ENCODE measurements at regions of chr3 and their contacts with region 1.

Region 1: DNA sequence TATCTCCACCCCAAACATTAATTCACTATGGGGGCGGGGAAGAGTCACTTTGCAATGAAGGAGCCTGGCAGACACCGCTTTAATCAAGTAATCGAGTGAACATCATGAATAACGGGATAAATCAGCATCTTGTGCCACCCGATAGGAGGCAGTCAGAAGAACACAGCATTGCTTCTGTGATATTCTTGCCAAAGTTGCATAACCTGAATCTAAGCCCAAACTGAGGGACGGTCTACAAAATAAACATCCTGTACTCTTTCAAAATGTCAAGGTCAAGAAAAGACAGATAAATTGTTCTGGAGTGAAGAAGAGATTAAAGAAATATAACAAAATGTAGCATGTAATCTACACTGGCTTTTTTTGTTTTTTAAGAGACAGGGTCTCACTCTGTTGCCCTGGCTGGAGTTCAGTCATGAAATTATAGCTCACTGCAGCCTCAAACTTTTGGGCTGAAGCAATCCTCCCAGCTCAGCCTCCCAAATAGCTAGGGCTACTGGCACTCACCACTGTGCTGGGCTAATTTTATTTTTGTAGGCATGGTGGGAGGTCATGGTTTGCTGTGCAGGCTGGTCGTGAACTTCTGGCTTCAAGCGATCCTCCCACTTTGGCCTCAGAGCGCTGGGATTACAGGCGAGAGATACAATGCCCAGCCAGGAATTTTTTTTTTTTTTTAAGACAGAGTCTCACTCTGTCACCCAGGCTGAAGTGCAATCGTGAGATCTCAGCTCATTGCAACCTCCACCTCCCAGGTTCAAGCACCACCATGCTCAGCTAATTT is 20.1 kb upstream of the VWA5B2 start:
- DNase-seq: no peak
- ATAC-seq: no peak
- H3K4me3 ChIP-seq: no peak overlapping the region
- H3K27ac ChIP-seq: no peak overlapping the region
- H3K4me1 ChIP-seq: no peaks in the 10 kb centered on the region
- H3K27me3 ChIP-seq: peaks cover 22% of the 10 kb centered on the region
- CTCF ChIP-seq: no peak

Region 2: DNA sequence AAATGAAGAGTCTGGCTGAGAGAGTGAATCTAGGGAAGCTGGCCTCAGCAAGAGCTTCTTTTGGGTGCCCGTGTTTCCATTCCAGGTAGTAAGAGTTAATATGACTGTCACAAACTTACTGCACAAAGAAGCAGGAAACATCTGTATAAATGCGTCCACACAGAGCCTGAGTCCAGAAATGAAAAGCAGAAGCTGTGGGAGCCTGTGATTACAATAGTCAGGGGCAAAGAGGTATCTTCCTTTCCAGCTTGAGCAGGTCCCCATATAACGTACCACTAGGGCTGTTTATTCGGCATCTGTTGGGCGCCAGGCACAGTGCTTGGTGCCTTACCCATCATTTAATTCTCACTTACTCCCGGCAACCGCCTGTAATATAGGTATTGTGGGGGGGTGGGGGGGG is 996.8 kb before region 1 on chr3:
- CTCF ChIA-PET with region 1: no interaction called
- POLR2A ChIA-PET with region 1: interaction called, 12 read pairs
- intact Hi-C with region 1: no loop called
- DNase-seq: no peak
- ATAC-seq: no peak
- H3K4me3 ChIP-seq: no peak overlapping the region
- H3K27ac ChIP-seq: no peak overlapping the region
- H3K4me1 ChIP-seq: peaks cover 15% of the 10 kb centered on the region
- H3K27me3 ChIP-seq: no peaks in the 10 kb centered on the region
- CTCF ChIP-seq: no peak

Region 3: DNA sequence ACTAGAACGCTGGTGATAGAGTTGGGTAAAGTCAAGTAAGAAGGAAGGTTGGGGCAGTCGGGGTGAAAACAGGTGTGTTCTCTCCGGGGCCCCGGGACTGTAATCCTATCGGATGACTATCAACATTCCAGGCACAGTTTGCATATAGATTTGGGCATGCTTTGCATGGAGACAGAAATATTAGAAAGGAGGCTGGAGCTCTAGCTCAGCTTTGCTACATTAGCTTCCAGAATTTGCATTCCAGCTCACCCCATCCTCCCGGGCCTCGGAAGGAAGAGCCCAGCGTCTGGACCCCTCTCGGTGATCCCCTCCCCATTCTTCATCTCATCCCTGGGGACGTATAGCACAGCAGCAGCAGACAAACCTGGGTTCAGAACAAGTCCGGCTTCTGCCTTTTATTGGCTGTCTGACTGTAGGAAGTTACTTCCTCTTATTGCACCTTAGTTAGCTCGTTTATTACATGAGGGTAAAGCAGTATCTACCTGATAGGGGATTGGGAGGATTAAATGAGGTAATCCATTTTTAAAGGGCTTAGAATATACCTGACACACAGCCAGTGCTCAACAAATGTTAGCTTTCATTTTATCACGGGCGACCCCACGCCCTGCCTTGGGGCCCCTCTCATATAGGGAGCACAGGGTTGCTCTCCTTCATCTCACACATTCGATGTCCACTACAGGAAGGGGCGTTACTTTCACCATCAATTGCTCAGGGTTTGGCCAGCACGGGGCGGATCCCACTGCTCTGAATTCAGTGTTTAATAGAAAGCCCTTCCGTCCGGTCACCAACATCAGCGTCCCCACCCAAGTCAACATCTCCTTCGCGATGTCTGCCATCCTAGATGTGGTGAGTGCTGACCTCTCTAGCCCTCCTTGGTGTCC is 109.3 kb before region 1 on chr3:
- CTCF ChIA-PET with region 1: no interaction called
- POLR2A ChIA-PET with region 1: no interaction called
- intact Hi-C with region 1: no loop called
- DNase-seq: no peak
- ATAC-seq: no peak
- H3K4me3 ChIP-seq: no peak overlapping the region
- H3K27ac ChIP-seq: no peak overlapping the region
- H3K4me1 ChIP-seq: no peaks in the 10 kb centered on the region
- H3K27me3 ChIP-seq: no peaks in the 10 kb centered on the region
- CTCF ChIP-seq: no peak

Region 4: DNA sequence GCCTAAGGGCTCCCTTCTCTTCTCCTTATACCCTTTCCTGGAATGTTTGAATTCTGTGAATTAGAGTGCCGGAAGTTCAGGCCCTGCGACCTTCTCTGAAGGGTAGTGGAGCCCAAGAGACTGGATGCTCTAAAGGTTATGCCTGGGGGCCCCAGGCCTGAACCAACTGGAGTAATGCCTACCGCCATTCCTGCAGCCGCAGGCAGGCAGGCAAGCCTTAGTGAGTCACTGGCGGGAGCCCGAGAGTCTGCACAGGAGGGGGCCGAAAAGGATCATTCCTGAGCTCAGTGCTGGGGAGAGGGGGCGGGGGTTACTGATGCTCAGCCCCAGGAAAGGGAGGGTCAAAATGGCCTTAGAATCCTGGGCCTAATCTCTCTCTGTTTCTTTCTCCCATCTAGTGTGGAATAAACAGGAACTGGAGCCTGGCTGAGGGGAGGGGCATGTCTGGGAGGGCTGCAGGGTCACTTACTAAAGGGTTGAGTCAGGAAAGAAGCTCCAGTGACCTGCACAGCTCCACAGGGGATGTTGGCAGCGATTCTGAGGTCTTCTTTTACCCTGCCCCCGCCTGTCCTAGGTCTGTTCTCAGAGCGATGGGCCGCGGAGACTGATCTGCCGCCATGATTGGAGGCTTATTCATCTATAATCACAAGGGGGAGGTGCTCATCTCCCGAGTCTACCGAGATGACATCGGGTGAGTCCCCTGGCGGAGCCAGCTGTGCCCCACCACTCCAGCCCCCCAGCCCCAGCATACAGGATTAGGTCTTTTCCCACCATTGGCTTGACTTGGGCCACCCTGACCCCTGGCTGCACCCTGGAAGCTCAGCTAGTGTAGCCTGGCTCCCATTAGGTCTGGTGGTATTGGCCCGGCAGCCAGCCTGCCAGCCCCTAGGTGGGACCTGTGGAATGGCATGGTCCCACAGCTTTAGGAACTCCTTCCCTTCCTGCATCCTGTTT is 32.7 kb before region 1 on chr3:
- CTCF ChIA-PET with region 1: no interaction called
- POLR2A ChIA-PET with region 1: no interaction called
- intact Hi-C with region 1: no loop called
- DNase-seq: peak; percentile 81
- ATAC-seq: peak; percentile 45
- H3K4me3 ChIP-seq: peak overlapping the region; percentile 89
- H3K27ac ChIP-seq: peak overlapping the region; percentile 62
- H3K4me1 ChIP-seq: peaks cover 47% of the 10 kb centered on the region
- H3K27me3 ChIP-seq: no peaks in the 10 kb centered on the region
- CTCF ChIP-seq: no peak

Region 5: DNA sequence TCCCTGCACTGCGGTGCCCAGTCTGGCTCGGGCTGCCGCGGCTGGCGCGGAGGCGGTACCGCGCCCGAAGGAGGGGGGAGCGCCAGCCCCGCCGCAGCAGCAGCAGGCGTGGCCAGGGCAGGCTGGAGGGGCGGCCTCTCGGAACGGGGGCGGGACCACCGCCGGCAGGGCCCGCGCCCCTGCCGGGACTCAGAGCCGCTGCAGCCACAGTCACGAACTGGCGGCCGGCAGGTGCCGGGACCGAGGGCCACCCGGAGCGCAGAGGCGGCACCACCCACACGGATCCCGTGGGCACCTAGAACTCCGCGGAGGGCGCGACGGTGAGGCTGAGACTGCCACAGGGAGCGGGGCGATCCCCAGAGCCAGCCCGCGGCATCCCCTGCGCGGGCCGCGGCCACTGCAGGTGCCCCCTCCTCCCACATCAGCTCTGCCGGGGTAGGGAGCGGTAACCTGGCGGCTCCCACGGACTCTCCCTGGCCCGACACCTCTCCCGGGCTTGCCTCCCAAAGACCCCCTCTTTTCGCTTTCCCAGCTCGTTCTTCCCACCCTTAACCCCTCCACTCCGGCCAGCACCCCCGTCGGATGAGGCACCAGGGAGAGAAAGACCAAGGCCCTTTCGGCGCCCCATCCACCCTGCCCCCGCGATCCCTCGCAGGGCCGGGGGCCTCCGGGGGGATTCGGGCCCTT is 20.2 kb after region 1 on chr3 and contains the start of gene VWA5B2:
- CTCF ChIA-PET with region 1: interaction called, 14 read pairs
- POLR2A ChIA-PET with region 1: no interaction called
- intact Hi-C with region 1: no loop called
- DNase-seq: peak; percentile 80
- ATAC-seq: peak; percentile 80
- H3K4me3 ChIP-seq: peak within 1 kb of the TSS; percentile 75
- H3K27ac ChIP-seq: no peak within 1 kb of the TSS
- H3K4me1 ChIP-seq: peaks cover 18% of the 10 kb centered on the region
- H3K27me3 ChIP-seq: peaks cover 10% of the 10 kb centered on the region
- CTCF ChIP-seq: no peak
- total RNA-seq, gene VWA5B2: 1.4 and 1.9 TPM in 2 replicates

Region 6: DNA sequence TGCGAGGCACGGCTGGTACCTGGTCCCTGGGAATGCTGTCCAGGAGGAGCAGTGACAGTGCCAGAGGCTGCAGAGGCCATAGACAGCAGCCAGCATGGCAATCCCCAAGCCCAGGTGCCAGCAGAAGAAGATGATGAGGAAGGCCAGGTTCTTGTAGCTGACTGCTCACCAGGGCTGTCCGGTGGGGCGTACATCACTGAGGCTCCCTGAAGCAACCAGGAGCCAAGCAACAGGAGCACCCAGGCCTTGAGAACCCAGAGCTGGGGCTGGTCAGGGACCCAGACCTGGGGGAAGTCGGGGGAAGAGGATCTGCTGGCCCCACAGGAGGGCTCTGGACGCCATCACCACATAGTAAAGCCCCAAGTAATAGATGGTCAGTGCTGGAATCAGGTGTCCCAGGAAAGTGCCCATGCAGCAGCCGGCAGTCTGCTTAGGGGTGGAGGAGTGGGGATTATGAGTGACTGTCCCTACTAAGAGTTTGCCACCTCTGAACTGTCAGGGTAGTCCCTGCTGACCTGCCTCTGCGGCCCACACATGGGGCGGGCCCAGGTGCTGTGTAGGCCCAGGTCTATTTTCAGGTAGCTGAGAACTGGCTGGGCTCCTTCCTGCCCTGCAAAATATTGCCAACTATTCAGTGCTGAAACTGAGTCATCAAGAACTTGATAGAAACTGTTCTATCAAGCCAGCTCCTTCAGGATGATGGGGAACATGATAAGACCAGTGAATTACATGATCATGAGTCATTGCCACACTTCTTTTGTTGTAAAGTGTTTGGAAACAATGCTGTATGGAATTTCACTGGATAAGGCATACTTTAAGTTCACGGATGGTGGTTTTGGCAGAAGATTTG is 239.2 kb after region 1 on chr3:
- CTCF ChIA-PET with region 1: no interaction called
- POLR2A ChIA-PET with region 1: no interaction called
- intact Hi-C with region 1: no loop called
- DNase-seq: peak; percentile 91
- ATAC-seq: peak; percentile 91
- H3K4me3 ChIP-seq: no peak overlapping the region
- H3K27ac ChIP-seq: no peak overlapping the region
- H3K4me1 ChIP-seq: peaks cover 13% of the 10 kb centered on the region
- H3K27me3 ChIP-seq: no peaks in the 10 kb centered on the region
- CTCF ChIP-seq: no peak

Measured in PC-3 (cell line).